Posterior cingulate gyrus (tissue), 11 donors: ENCODE measurements at regions of chr20 and their contacts with region 1.

Region 1: GRCh38 chr20:21505161-21505809 is 8.6 kb downstream of the NKX2-2 start:
- DNase-seq: peak in 9 of 10 donors; percentile 66 to 95 (median 81)

Region 2: DNA sequence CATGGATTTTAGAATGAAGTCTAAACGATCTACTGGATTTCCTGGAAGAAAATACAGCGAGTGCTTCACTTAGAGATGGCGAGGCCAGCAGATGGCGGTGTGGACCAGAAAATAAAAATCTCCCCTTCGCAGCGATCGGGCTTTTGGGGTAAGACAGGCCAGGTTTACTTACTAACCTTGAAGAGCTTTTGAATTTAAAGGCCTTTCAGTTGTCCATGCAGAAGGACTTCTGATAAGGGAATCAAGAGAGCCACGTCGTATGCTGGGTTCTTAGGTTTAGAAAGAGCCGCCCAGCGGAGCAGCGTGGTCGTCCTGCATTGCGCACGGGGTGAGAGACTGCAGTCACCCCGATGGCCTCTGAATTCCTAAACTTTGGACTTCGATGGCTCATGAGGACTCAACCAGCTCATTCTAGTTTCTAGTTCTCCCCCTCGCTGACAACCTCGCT is 667.7 kb before region 1 on chr20:
- intact Hi-C with region 1: loop called (anchors 2 kb)
- DNase-seq: peak; percentile 50 to 96 (median 80)

Region 3: DNA sequence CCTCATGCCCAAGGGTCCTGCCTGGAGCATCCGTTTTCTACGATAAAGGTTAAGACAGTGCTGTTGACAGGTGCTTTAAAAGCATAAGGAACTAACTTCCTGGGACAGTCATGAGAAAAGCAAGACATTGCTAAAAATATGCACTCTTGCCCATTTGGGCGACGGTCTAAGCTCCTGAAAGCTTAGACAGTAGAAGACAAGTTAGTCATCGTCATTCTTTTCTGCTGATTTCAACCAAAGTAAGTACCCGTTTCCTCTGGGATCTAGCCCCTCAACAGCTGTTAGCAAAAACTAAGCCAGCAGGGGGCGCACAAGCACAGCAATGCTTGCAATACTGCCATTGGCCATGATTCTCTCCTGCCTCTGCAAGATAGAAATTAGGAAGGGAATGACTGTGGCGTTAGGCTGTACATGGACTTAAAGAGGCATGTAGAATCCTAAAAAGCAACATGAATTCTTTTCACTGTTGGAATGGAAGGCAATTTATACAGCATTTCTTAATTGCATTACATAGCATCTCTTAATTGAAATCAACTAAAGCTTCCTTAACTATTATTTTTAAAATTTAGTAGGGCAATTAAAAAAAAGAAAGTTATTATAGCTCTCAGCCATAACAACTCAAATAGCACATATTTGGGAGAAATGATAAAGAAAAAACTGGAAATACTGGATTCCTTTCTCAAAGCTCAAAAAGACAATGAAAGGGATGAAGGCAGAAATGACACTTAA is 645.0 kb before region 1 on chr20:
- intact Hi-C with region 1: loop called (anchors 1 kb)
- DNase-seq: peak; percentile 75 to 99 (median 95)

Region 4: GRCh38 chr20:21048841-21049273 is 456.4 kb before region 1 on chr20:
- intact Hi-C with region 1: loop called (anchors 10 kb)
- DNase-seq: peak in 4 of 10 donors; percentile 6 to 74 (median 64)

Region 5: GRCh38 chr20:21303061-21303871 is 202.0 kb before region 1 on chr20 and contains the start of gene XRN2:
- intact Hi-C with region 1: loop called (anchors 10 kb)
- DNase-seq: peak; percentile 92 to 99 (median 96)

Region 6: GRCh38 chr20:21520702-21521595 is 15.7 kb after region 1 on chr20:
- intact Hi-C with region 1: loop called (anchors 1 kb)
- DNase-seq: peak in 6 of 10 donors; percentile 46 to 94 (median 82)

Region 7: GRCh38 chr20:21615617-21616080 is 110.4 kb after region 1 on chr20:
- intact Hi-C with region 1: loop called (anchors 1 kb)
- DNase-seq: peak; percentile 77 to 98 (median 87)

Region 8: GRCh38 chr20:21702553-21703470 is 197.5 kb after region 1 on chr20:
- intact Hi-C with region 1: no loop called
- DNase-seq: peak in 7 of 10 donors; percentile 41 to 93 (median 77)